MCF 10A (cell line): ENCODE measurements at regions of chr16 and their contacts with region 1.

Region 1: GRCh38 chr16:8567750-8568617 is 22.3 kb downstream of the TMEM114 start:
- DNase-seq: peak; percentile 93
- H3K4me3 Mint-ChIP-seq: no peak overlapping the region
- H3K27ac Mint-ChIP-seq: no peak overlapping the region
- H3K4me1 Mint-ChIP-seq: peaks cover 3% of the 10 kb centered on the region
- H3K27me3 Mint-ChIP-seq: no peaks in the 10 kb centered on the region
- CTCF ChIP-seq: peak; percentile 97

Region 2: DNA sequence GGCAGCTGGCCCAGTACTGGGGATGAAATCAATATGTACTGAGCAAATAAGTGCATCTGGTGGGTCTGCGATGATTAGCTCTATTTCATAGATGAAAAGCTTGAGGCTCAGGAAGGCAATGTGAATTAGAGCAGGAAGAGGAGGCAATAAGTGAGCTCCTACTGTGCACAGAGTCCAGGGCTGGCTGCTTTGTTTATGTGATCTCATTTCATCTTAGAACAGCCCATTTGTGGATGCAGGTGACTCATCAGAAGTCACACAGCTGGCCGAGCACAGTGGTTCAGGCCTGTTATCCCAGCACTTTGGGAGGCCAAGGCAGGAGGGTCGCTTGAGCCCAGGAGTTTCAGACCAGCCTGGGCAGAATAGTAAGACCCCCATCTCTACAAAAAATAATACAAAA is 15.2 kb after region 1 on chr16:
- CTCF ChIA-PET with region 1: interaction called, 27 read pairs
- POLR2A ChIA-PET with region 1: no interaction called
- intact Hi-C with region 1: no loop called
- DNase-seq: no peak
- H3K4me3 Mint-ChIP-seq: no peak overlapping the region
- H3K27ac Mint-ChIP-seq: no peak overlapping the region
- H3K4me1 Mint-ChIP-seq: no peaks in the 10 kb centered on the region
- H3K27me3 Mint-ChIP-seq: no peaks in the 10 kb centered on the region
- CTCF ChIP-seq: no peak

Region 3: GRCh38 chr16:8634991-8635736 is 67.2 kb after region 1 on chr16:
- CTCF ChIA-PET with region 1: interaction called, 39 read pairs
- POLR2A ChIA-PET with region 1: no interaction called
- intact Hi-C with region 1: loop called (anchors 5 kb)
- DNase-seq: no peak
- H3K4me3 Mint-ChIP-seq: no peak overlapping the region
- H3K27ac Mint-ChIP-seq: no peak overlapping the region
- H3K4me1 Mint-ChIP-seq: no peaks in the 10 kb centered on the region
- H3K27me3 Mint-ChIP-seq: no peaks in the 10 kb centered on the region
- CTCF ChIP-seq: peak; percentile 31

Region 4: DNA sequence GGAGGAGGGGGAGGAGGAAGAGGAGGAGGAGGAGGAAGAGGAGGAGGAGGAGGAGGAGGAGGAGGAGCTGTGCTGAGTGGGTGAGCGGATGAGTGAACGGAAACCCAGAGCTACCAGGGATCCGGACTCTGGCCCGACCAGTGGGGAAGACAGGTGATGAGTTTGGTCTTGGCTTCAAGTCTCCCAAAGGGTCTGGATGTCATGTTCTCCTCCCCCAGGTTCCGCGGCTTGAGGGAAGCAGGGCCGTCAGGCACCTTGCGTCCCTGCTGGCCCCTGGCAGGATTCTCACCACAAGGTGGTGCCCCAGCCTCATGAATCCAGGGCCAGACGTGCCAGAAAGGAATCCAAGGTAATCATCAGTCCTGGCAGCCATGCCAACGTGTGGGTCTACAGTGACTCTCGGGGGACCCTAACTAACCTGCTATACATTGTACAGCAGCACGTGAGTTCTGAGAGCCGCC is 92.9 kb after region 1 on chr16:
- CTCF ChIA-PET with region 1: interaction called, 60 read pairs
- POLR2A ChIA-PET with region 1: no interaction called
- intact Hi-C with region 1: no loop called
- DNase-seq: peak; percentile 75
- H3K4me3 Mint-ChIP-seq: no peak overlapping the region
- H3K27ac Mint-ChIP-seq: no peak overlapping the region
- H3K4me1 Mint-ChIP-seq: no peaks in the 10 kb centered on the region
- H3K27me3 Mint-ChIP-seq: no peaks in the 10 kb centered on the region
- CTCF ChIP-seq: peak; percentile 82

Region 5: DNA sequence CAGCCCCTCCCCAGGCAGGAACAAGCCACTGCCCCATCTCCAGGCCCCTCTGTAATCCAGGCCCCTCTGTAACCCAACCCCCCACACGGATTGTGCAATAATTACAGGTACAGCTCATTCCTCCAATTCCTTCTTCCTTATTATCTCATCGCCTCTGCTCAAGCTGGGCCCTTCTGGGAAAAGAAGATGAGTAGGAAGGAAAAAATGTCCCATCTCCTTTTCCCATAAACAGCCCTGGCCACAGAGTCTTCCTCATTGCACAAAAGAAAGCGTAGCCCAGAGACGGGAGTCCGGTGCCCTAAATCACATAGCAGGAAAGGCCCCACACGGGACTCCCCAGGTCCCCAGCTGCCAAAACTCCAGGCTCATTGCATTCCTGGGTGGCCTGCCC is 310.5 kb after region 1 on chr16:
- CTCF ChIA-PET with region 1: interaction called, 36 read pairs
- POLR2A ChIA-PET with region 1: no interaction called
- intact Hi-C with region 1: loop called (anchors 2 kb)
- DNase-seq: peak; percentile 84
- H3K4me3 Mint-ChIP-seq: no peak overlapping the region
- H3K27ac Mint-ChIP-seq: peak overlapping the region; percentile 25
- H3K4me1 Mint-ChIP-seq: peaks cover 12% of the 10 kb centered on the region
- H3K27me3 Mint-ChIP-seq: no peaks in the 10 kb centered on the region
- CTCF ChIP-seq: no peak

Region 6: DNA sequence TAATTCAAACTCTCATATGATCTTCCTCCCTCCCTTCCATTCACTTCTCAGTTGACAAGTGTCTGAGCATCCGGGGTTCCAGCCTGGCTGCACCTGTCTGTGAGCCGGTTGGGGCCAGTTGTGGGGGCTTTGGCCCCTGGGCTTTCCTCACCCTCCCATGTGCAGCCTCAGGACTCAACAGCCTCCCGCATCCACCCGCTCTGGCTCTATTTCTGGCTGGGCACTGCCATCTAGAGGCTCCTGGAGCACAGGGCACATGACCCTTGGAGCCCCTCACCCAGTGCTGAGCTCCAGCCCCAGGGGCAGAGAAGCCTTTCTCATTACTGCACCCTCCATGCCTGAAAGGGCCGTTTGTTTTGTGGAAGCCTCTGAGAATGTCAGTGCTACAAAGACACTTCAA is 566.8 kb after region 1 on chr16:
- CTCF ChIA-PET with region 1: no interaction called
- POLR2A ChIA-PET with region 1: no interaction called
- intact Hi-C with region 1: loop called (anchors 10 kb)
- DNase-seq: peak; percentile 69
- H3K4me3 Mint-ChIP-seq: no peak overlapping the region
- H3K27ac Mint-ChIP-seq: no peak overlapping the region
- H3K4me1 Mint-ChIP-seq: peaks cover 11% of the 10 kb centered on the region
- H3K27me3 Mint-ChIP-seq: peaks cover 14% of the 10 kb centered on the region
- CTCF ChIP-seq: peak; percentile 76